Activated naive CD4-positive, alpha-beta T cell treated with anti-CD3 and anti-CD28 coated beads for 36 hours (primary cell): ENCODE measurements at regions of chr6 and their contacts with region 1.

Region 1: DNA sequence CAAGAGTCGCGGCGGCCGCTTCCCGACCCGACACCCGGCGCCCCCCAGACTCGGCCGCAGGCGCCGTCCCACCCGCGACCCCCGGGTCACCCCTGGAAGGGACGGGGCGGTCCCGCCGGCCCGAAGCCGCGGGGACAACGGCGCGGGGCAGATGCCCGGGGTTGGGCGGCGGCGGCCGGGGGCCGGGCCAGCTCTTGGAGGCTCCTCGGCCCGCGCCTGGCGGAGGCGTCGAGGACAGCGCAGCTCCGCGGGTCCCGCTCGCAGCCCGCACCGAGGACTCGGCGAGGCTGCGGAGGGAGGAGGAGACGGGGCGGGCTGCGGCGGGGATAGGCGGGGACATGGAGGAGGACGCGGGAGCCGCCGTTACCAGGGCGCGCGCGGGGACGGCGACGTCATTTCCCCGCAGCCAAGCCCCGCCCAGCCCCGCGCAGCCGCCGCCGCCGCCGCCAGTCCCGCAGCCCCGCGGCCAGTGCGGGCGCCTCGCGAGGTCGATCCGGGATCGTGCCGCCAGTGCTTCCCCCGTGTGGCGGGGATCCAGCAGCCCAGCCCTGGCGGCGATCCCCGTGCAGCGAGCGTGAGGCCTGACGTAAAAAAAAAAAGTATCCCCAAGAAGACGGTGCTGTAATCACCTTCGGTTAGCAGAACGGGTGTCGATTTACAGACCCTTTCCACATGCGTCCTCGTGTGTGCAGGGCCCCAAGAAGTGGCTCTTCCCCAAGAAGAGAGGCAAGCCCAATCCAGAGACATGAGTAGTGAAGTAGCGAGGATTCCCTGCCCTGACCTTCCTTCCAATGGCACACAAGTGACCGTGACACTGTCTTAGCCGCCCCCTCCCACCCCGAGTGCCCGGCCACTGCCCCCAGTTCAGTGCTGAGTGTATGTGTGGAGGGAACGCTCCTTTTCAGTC is at the start of gene FAM184A:
- DNase-seq: peak; percentile 74
- H3K4me3 Mint-ChIP-seq: peak within 1 kb of the TSS; percentile 86
- H3K27ac Mint-ChIP-seq: peak within 1 kb of the TSS; percentile 96
- H3K4me1 Mint-ChIP-seq: peaks cover 42% of the 10 kb centered on the region
- H3K27me3 Mint-ChIP-seq: no peaks in the 10 kb centered on the region
- total RNA-seq, gene FAM184A: 13.5 to 14.0 TPM

Region 2: DNA sequence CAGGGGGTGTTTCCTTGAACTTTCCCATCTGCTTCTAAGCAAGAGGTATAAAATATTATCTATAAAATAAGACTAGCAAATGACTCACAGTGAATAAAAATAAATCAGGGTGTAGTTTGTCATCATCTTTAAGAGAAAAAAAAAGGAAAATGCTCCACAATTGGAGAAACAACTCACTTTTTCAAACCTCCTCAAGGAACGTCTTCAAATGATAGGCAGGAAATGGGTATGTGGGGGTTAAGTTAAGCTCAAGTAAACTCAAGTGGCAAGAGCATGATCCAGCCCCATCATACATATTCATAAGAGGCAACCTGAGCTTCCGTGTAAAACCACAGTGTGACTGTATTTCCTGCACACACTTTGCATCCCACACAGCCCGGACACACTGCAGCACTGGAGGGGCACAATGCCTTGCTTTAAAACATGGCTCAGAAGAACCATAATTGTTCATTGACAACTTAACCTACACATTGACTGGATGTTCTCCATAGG is 368.7 kb before region 1 on chr6:
- CTCF ChIA-PET with region 1: no interaction called
- intact Hi-C with region 1: loop called (anchors 1 kb)
- DNase-seq: peak; percentile 88
- H3K4me3 Mint-ChIP-seq: peak overlapping the region; percentile 82
- H3K27ac Mint-ChIP-seq: peak overlapping the region; percentile 98
- H3K4me1 Mint-ChIP-seq: peaks cover 70% of the 10 kb centered on the region
- H3K27me3 Mint-ChIP-seq: no peaks in the 10 kb centered on the region

Region 3: DNA sequence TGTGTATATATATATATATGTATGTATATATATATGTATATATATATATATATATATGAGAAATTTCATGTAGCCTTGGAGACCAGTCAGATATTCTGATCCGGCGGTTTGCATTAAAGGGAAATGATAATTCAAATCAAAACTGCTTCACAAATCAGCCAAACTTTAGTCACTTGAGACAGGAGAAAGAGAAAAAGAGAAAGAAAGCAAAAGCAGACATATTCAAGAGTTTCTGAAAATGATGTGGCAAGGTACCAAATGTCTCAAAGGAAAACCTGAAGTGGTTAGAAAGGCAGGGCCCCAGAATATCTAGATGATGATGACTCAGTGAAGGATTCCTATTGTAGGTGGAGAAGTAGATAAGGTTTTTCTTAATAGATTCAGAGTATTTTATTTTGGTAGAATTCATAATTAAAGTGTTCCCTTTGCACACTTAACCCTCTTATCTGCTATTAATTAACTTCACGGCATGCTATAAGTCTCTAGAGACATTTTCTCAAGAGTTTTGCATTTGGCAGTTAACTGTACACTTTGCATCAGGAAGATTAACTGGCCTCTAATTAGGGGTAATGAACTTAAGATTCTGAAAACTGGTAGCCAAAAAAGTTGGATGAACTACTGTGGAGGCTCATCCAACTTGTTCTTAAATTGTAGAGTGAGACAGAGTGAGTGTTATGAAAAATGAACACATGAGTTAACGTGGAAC is 234.8 kb before region 1 on chr6:
- CTCF ChIA-PET with region 1: no interaction called
- intact Hi-C with region 1: loop called (anchors 1 kb)
- DNase-seq: peak; percentile 50
- H3K4me3 Mint-ChIP-seq: no peak overlapping the region
- H3K27ac Mint-ChIP-seq: peak overlapping the region; percentile 2
- H3K4me1 Mint-ChIP-seq: peaks cover 23% of the 10 kb centered on the region
- H3K27me3 Mint-ChIP-seq: no peaks in the 10 kb centered on the region

Region 4: GRCh38 chr6:118968416-118968815 is 110.2 kb before region 1 on chr6:
- CTCF ChIA-PET with region 1: interaction called, 5 read pairs
- intact Hi-C with region 1: loop called (anchors 1 kb)
- DNase-seq: no peak
- H3K4me3 Mint-ChIP-seq: no peak overlapping the region
- H3K27ac Mint-ChIP-seq: no peak overlapping the region
- H3K4me1 Mint-ChIP-seq: no peaks in the 10 kb centered on the region
- H3K27me3 Mint-ChIP-seq: no peaks in the 10 kb centered on the region

Region 5: GRCh38 chr6:119096721-119097565 is 18.3 kb after region 1 on chr6:
- CTCF ChIA-PET with region 1: no interaction called
- intact Hi-C with region 1: loop called (anchors 1 kb)
- DNase-seq: no peak
- H3K4me3 Mint-ChIP-seq: no peak overlapping the region
- H3K27ac Mint-ChIP-seq: no peak overlapping the region
- H3K4me1 Mint-ChIP-seq: peaks cover 17% of the 10 kb centered on the region
- H3K27me3 Mint-ChIP-seq: no peaks in the 10 kb centered on the region

Region 6: DNA sequence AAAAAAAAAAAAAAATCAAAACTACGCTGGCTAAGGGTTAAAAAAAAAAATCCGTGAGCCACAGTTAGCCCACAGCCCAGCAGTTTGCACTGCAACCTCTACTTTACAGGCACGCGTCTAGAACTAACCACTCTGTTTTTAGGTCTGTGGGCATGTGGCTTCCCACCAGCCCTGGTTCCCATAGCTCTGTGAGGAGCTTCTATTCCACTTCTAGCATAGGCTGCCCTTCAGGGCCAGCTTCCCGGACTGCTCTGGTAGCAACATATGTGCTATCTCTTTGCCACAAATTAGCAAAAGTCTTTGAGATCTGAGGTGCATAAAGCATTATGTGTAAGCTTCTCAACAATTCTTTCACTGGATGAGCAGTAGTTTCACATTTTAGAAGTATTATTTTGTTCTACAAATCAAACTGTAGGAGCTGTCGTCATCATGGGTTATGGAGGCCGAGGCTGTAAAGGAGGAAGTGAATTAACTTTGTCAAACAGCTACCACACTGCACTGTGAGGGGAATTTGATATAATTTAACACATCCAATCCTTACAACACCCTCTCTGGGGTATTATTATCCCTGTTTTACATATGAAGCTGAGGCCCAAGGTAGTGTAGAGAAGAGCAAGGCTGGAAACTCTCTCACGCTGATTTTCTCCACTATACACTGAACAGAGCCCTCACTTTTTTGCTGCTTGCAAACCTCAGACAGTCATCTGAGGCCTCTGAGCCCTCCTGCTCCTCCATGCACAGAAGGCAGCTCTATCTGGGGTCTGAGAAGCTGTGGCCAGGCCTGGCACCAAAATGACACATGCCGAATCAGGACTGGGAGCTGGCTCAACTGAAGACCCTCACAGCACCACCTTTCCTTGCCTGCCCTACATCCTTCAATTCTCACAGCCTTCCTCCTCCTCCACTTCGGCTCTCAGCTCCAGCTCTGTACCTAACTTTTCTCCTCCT is 235.6 kb after region 1 on chr6:
- CTCF ChIA-PET with region 1: no interaction called
- intact Hi-C with region 1: loop called (anchors 1 kb)
- DNase-seq: peak; percentile 65
- H3K4me3 Mint-ChIP-seq: peak overlapping the region; percentile 41
- H3K27ac Mint-ChIP-seq: peak overlapping the region; percentile 92
- H3K4me1 Mint-ChIP-seq: peaks cover 58% of the 10 kb centered on the region
- H3K27me3 Mint-ChIP-seq: no peaks in the 10 kb centered on the region

Region 7: GRCh38 chr6:119328254-119328653 is 249.6 kb after region 1 on chr6:
- CTCF ChIA-PET with region 1: no interaction called
- intact Hi-C with region 1: no loop called
- DNase-seq: no peak
- H3K4me3 Mint-ChIP-seq: no peak overlapping the region
- H3K27ac Mint-ChIP-seq: no peak overlapping the region
- H3K4me1 Mint-ChIP-seq: peaks cover 4% of the 10 kb centered on the region
- H3K27me3 Mint-ChIP-seq: no peaks in the 10 kb centered on the region

Region 8: GRCh38 chr6:119856136-119856535 is 777.5 kb after region 1 on chr6:
- CTCF ChIA-PET with region 1: no interaction called
- intact Hi-C with region 1: loop called (anchors 1 kb)
- DNase-seq: peak; percentile 23
- H3K4me3 Mint-ChIP-seq: no peak overlapping the region
- H3K27ac Mint-ChIP-seq: no peak overlapping the region
- H3K4me1 Mint-ChIP-seq: peaks cover 10% of the 10 kb centered on the region
- H3K27me3 Mint-ChIP-seq: peaks cover 7% of the 10 kb centered on the region